ENCODE measurements at regions of chr5 and their contacts with region 1.

Region 1: DNA sequence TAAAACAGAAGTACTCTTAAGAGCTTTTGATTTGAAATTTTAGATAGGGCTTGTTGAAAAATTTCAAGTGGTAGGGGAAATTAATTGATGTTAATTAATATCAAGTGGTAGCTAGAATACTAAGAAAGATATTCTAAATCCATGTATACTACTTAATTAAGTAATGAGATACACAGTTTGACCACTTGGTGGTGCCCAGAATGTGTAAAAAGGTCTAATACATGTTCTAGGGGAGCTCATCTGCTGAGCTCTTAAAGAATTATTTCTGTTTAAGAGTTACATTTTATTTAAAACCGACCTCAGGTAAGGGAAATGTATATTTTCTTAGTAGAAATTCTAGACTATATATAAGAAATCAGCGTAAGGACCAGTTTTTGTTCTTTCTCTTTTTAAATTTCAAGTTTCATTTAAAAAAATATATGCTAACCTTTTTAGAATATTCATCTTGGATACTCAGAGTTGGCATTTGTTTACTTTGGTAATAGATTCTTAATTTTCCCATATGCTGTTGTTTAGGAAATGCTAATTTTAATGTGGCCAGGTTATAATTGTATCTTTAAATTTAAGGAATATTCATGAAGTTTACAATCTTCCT is 61.5 kb downstream of the LNPEP start:
- DNase-seq: no peak
- H3K4me3 ChIP-seq: no peak overlapping the region
- H3K27ac ChIP-seq: no peak overlapping the region
- H3K4me1 ChIP-seq: no peaks in the 10 kb centered on the region; a peak in 1 of 7 replicates
- H3K27me3 ChIP-seq: no peaks in the 10 kb centered on the region
- CTCF ChIP-seq: peak in 2 of 3 experiments; percentile 34; a peak in 2 of 4 replicates
- EP300 ChIP-seq: no peak
- POLR2A ChIP-seq: no peak
- RAD21 ChIP-seq: peak; percentile 57 to 59

Region 2: GRCh38 chr5:96977228-96977627 is 20.1 kb before region 1 on chr5:
- CTCF ChIA-PET with region 1: interaction called, 10 read pairs
- POLR2A ChIA-PET with region 1: no interaction called
- DNase-seq: no peak
- H3K4me3 ChIP-seq: no peak overlapping the region
- H3K27ac ChIP-seq: no peak overlapping the region
- H3K4me1 ChIP-seq: peaks cover 0 to 3% (median 1%) of the 10 kb centered on the region in 4 experiments; a peak in 1 of 7 replicates
- H3K27me3 ChIP-seq: no peaks in the 10 kb centered on the region
- CTCF ChIP-seq: no peak
- EP300 ChIP-seq: no peak
- POLR2A ChIP-seq: no peak
- RAD21 ChIP-seq: no peak

Region 3: DNA sequence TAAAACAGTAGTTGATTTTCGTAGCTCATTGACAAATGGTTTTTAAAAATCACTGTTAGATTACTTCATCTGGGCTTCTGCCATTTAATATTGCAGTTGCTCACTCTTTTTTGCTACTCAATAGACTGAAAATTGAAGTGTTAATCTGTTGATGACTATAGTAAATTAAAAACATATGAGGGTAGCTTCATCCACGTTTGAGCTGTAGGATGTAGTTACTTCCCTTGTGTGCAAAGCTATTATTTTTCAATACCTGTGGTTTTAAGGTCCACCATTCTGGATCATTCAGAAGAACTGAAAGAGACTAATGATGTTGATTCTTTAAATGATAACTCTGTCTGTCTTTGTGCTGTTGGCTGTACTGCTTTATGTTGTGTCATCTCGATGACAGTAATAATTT is 13.2 kb after region 1 on chr5:
- CTCF ChIA-PET with region 1: interaction called, 21 read pairs
- POLR2A ChIA-PET with region 1: no interaction called
- DNase-seq: no peak
- H3K4me3 ChIP-seq: no peak overlapping the region
- H3K27ac ChIP-seq: no peak overlapping the region
- H3K4me1 ChIP-seq: 0 out of 7 replicates have a peak, but pooled peaks cover 0 to 4% (median 0%) of the 10 kb centered on the region in 4 experiments
- H3K27me3 ChIP-seq: no peaks in the 10 kb centered on the region
- CTCF ChIP-seq: no peak
- EP300 ChIP-seq: no peak
- POLR2A ChIP-seq: no peak
- RAD21 ChIP-seq: no peak

Region 4: DNA sequence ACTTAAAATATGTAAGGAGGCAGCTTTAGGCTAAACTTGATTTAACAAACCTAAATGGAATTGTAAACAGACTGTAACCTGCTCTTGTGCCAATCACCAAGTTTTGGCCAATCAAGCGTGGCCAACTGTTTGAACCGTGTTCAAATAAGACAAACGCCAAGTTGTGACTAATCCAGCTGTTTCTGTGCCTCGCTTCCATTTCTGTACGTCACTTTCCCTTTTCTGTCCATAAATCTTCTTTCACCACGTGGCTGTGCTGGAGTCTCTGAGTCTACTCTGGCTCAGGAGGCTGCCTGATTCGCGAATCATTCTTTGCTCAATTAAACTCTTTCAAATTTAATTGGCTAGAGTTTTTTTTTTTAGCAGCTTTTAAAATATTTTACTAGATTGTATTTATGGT is 73.7 kb after region 1 on chr5:
- CTCF ChIA-PET with region 1: no interaction called
- POLR2A ChIA-PET with region 1: no interaction called
- DNase-seq: no peak
- H3K4me3 ChIP-seq: no peak overlapping the region
- H3K27ac ChIP-seq: no peak overlapping the region
- H3K4me1 ChIP-seq: peaks cover 0 to 3% (median 0%) of the 10 kb centered on the region in 4 experiments; a peak in 1 of 7 replicates
- H3K27me3 ChIP-seq: no peaks in the 10 kb centered on the region
- CTCF ChIP-seq: no peak
- EP300 ChIP-seq: no peak
- POLR2A ChIP-seq: no peak
- RAD21 ChIP-seq: no peak

Region 5: DNA sequence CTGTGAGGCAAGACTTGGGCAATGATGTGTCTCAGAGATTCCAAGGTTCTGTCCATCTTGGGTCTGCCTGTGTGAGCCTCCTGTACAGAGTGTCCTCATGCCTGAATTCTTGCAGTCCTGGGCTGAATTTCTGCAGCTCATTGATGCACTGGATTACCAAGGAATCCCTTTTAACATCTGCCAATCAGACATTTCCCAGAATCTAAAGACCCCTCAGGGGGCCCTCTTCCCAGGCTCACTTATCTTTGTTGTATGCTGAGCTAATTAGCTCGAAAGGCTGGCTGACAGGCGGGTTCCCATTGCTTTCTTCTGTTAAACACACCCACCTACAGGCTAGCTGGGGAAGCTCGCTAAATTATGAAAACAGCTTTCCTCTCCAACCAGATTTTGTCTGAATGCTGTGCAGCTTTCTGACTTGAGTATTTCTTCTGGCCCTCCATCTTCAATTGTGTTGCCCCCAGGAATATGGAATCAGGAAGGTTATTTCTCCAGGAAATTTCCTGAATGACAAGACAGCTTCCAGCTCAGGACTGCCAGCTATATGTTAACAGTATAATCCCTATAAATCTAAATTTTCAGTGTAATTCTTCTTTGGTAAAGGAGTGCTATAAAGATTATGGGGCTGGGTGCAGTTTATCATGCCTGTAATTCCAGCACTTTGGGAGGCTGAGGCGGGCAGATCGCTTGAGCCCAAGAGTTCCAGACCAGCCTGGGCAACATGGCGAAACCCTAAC is 145.3 kb after region 1 on chr5 and contains the start of gene LIX1:
- CTCF ChIA-PET with region 1: interaction called, 56 read pairs
- POLR2A ChIA-PET with region 1: no interaction called
- DNase-seq: peak in 1 of 2 experiments; percentile 62
- H3K4me3 ChIP-seq: peak within 1 kb of the TSS in 1 of 4 experiments; percentile 12; a peak in 3 of 8 replicates
- H3K27ac ChIP-seq: no peak within 1 kb of the TSS
- H3K4me1 ChIP-seq: peaks cover 0 to 6% (median 2%) of the 10 kb centered on the region in 4 experiments; a peak in 4 of 7 replicates
- H3K27me3 ChIP-seq: no peaks in the 10 kb centered on the region
- CTCF ChIP-seq: peak; percentile 23 to 76 (median 70)
- EP300 ChIP-seq: no peak
- POLR2A ChIP-seq: no peak
- RAD21 ChIP-seq: peak; percentile 91 to 93
- total RNA-seq, gene LIX1: 0.26 and 0.33 TPM in 2 replicates